Cardiac septum (tissue), 1 donor: ENCODE measurements at regions of chr3 and their contacts with region 1.

Region 1: DNA sequence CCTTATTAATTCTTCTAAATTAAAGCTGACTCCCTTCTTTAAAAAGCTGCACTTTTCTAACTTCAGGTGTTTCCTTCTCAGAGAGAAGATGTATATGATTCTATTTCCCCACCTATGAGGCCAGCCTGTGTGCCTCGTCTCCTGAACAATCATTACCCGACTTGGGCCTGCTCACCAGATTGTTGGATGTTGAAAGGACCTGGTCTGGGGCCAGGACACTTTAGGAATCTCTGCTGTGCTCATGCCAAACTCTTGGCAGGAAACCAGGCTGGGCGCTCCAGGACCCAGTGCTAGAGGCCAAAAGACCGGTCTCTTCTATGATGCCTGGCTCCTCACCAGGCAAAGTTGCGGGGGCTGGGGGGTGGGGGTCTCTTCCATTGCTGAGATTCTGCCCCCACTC is 16.9 kb upstream of the LRRC31 start:
- DNase-seq: peak; percentile 86

Region 2: DNA sequence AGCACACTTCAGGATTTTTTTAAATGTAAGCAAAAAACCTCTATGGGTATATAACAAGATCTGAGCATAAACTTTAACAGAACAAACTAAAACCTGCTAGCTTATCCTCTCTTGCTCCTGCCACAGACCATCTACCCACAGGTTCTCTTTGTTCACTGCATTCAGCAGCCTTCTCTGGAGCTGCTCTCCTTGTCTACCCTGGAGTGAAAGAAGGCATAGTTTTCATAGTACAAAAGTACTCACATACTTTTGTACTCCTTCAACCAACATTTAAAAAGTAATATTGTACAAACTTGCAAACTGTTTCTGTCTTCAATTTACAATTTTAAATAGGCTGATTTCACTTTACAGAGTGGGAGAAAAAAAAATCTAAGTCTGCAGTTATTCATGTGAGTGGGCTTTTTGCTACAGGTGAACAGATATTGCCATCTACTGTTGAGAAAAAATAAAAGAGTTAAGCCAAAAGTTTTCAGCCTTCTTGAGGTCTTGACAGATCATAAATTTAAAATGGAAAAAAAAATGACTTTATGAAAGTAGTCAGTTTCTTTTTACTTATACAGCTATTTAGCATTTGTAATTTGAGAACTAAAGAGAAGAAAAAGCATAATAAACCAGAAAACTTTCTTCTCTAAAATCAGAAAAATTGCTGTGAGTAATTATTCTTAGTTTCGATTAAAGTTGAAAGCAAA is 142.2 kb before region 1 on chr3:
- intact Hi-C with region 1: no loop called
- DNase-seq: no peak

Region 3: DNA sequence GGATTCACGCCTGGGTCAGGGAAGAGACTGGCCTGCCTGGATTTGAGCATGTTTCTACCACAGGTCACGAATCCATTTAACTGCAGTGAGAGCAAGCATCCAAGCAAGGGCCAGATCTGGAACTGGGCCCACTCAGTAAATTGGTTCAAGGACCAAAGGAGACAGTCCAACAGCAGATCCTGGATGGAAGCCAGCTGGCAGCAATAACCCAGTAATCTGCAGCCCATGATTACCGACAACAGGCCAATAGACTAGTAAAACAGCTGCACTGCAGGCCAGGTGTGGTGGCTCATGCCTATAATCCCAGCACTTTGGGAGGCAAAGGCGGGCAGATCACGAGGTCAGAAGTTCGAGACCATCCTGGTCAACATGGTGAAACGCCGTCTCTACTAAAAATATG is 36.5 kb after region 1 on chr3:
- intact Hi-C with region 1: loop called (anchors 2 kb)
- DNase-seq: peak; percentile 85